ENCODE measurements at regions of chr5 and their contacts with region 1.

Region 1: GRCh38 chr5:81838307-81838906 is 87.5 kb upstream of the SSBP2 start:
- DNase-seq: peak; percentile 35
- ATAC-seq: peak; percentile 79
- H3K4me3 Mint-ChIP-seq: no peak overlapping the region
- H3K27ac Mint-ChIP-seq: no peak overlapping the region
- H3K4me1 Mint-ChIP-seq: peaks cover 7% of the 10 kb centered on the region
- H3K27me3 Mint-ChIP-seq: no peaks in the 10 kb centered on the region

Region 2: GRCh38 chr5:81292130-81292529 is 546.3 kb before region 1 on chr5:
- CTCF ChIA-PET with region 1: no interaction called
- POLR2A ChIA-PET with region 1: no interaction called
- intact Hi-C with region 1: no loop called
- DNase-seq: no peak
- ATAC-seq: no peak
- H3K4me3 Mint-ChIP-seq: no peak overlapping the region
- H3K27ac Mint-ChIP-seq: no peak overlapping the region
- H3K4me1 Mint-ChIP-seq: peaks cover 50% of the 10 kb centered on the region
- H3K27me3 Mint-ChIP-seq: no peaks in the 10 kb centered on the region

Region 3: DNA sequence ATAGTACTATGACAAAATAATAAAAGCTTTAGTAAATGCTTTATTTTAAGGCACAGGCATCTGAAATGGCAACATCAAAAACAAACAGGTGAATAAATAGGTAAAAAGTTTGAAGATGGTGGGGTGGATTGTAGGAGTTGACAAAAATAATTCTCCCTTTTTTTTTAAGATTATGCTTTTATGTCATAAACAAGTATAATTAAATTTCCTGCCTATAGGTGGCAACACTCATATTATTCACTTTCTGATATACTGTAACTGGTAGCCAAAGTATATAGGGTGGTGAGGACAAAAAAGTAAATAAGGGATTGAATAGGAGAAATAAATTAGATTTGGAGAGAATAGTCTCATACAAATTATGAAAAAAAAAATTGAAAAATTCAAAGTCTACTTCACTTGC is 324.4 kb before region 1 on chr5:
- CTCF ChIA-PET with region 1: interaction called, 4 read pairs
- POLR2A ChIA-PET with region 1: no interaction called
- intact Hi-C with region 1: loop called in 1 of 2 experiments (anchors 2 kb)
- DNase-seq: no peak
- ATAC-seq: peak; percentile 51
- H3K4me3 Mint-ChIP-seq: no peak overlapping the region
- H3K27ac Mint-ChIP-seq: no peak overlapping the region
- H3K4me1 Mint-ChIP-seq: no peaks in the 10 kb centered on the region
- H3K27me3 Mint-ChIP-seq: no peaks in the 10 kb centered on the region

Region 4: DNA sequence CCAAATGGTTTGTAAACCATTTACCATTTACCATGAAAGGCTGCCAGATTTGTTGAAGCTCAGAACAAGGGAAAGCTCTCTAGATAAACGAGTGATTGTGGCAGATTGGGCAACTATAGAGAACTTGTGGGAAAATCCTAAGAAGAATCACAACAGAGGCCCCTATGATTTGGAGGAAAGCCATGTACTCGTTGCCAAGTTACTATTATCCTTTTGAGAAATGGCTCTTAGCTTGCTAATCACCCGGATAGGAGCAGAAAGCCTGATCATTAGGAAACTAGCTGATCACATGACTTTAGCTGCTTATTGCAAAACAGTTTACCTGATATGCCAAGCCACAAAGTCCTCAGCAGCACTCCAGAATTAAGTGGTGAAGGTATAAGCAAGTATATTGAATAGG is 109.9 kb after region 1 on chr5:
- CTCF ChIA-PET with region 1: no interaction called
- POLR2A ChIA-PET with region 1: no interaction called
- intact Hi-C with region 1: no loop called
- DNase-seq: no peak
- ATAC-seq: no peak
- H3K4me3 Mint-ChIP-seq: no peak overlapping the region
- H3K27ac Mint-ChIP-seq: no peak overlapping the region
- H3K4me1 Mint-ChIP-seq: no peaks in the 10 kb centered on the region
- H3K27me3 Mint-ChIP-seq: no peaks in the 10 kb centered on the region

Region 5: GRCh38 chr5:82129723-82130285 is 291.4 kb after region 1 on chr5:
- CTCF ChIA-PET with region 1: no interaction called
- POLR2A ChIA-PET with region 1: no interaction called
- intact Hi-C with region 1: no loop called
- DNase-seq: no peak
- ATAC-seq: no peak
- H3K4me3 Mint-ChIP-seq: no peak overlapping the region
- H3K27ac Mint-ChIP-seq: no peak overlapping the region
- H3K4me1 Mint-ChIP-seq: no peaks in the 10 kb centered on the region
- H3K27me3 Mint-ChIP-seq: no peaks in the 10 kb centered on the region